GM10248 (cell line): ENCODE measurements at regions of chr17 and their contacts with region 1.

Region 1: DNA sequence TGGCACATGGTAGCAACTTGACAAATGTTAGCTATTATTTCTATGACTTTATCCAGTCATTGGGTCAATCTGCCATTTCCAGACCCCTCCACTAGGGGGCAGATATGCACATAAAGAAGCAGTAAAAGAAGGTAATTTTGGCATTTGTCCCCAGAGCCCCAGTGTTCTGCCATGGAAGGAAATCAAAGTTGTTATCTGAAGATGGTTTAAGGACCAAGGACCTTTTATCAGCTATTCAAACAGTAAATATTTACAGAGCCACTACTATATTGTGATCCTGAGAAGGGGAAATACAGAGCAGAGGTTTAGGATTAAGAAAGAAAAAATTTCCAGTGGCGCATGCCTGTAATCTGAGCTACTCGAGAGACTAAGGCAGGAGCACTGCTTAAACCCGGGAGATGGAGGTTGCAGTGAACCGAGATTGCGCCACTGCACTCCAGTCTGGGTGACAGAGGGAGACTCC is 20.0 kb downstream of the TRAF4 start:
- DNase-seq: peak; percentile 71
- CTCF ChIP-seq: peak; percentile 77

Region 2: GRCh38 chr17:28576758-28577465 is 186.9 kb before region 1 on chr17 and contains the start of gene ALDOC:
- CTCF ChIA-PET with region 1: no interaction called
- POLR2A ChIA-PET with region 1: no interaction called
- DNase-seq: peak; percentile 99
- CTCF ChIP-seq: no peak

Region 3: DNA sequence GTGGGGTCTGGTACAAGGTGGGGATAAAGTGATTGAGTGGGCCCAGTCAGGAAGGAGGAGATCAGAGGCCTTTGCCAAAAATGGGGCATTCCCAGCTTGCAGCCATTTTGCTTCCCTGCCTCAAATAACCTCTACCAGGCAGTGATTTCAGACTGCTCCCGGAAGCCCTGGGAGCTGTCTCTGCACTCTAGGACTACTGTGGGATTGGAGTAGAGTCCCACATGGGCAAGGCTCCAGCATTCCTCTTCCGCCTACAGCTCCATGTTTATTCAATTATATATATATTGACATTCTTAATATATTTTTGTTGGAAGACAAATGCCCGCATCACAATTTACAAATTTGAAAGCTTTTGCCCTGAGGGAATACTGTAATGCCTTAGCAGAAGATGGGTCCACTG is 88.3 kb before region 1 on chr17:
- CTCF ChIA-PET with region 1: no interaction called
- POLR2A ChIA-PET with region 1: no interaction called
- DNase-seq: no peak
- CTCF ChIP-seq: no peak

Region 4: DNA sequence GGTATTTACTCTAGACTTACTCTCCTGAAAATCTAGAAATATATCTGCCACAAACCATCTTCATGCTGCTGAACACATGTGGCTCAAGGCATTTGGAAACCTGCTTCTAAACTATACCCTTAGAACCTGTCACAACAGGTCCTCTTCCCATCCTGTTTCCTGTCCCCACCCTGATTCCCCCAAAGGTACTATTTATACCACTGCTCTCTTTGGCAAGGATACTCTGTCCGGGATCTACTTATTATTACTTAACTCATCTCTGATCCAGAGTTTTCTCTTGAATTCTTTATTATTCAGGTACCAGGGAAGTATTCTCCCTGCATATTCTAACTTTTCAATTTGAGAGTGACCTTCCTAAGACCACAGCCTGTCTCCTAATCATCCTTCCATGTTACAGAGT is 13.3 kb after region 1 on chr17:
- CTCF ChIA-PET with region 1: interaction called, 94 read pairs
- POLR2A ChIA-PET with region 1: no interaction called
- DNase-seq: no peak
- CTCF ChIP-seq: no peak

Region 5: DNA sequence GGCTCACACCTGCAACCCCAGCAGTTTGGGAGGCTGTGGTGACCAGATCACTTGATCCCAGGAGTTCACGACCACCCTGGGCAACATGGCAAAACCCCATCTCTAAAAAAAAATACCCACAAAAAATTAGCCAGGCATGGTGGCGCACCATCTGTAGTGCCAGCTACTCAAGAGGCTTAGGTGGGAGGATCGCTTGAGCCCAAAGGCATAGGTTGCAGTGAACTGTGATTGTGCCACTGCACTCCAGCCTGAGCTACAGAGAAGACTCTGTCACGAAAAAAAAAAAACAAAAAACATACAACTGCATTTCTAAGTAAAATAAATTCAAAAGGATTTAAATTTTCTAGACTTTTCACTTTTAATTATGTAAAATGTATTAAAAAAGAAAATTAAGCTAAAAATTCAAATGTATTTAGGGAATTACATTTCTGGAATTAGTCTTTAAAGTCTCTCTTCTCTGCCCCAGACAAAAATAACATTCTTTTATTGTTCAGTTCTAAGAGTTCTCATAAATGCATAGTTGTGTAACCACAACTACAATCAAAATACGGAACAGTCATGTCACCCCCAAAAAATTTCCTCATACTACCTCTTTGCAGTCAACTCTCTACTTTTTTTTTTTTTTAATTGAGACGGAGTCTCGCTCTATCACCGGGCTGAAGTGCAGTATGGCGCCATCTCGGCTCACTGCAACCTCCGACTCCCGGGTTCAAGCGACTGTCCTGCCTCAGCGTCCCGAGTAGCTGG is 64.6 kb after region 1 on chr17:
- CTCF ChIA-PET with region 1: interaction called, 12 read pairs
- POLR2A ChIA-PET with region 1: no interaction called
- DNase-seq: no peak
- CTCF ChIP-seq: no peak

Region 6: DNA sequence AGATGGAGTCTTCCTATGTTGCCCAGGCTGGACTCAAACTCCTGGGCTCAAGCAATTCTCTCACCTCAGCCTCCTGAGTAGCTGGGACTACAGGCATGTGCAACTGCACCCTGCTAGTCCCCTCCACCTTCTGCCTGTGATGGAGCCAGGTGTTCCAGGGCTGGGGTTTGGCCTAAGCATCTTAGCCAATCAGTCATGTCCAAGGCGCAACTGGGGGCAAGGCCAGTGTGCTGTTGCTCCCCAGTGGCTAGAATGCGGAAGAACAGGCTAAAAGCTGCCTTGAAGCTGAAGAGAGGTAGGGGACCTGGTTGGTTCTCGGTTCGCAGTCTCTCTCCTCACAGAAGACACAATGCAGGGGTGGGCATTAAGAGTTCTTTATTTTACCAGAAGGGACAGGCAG is 115.1 kb after region 1 on chr17:
- CTCF ChIA-PET with region 1: interaction called, 13 read pairs
- POLR2A ChIA-PET with region 1: interaction called, 10 read pairs
- DNase-seq: peak; percentile 70
- CTCF ChIP-seq: peak; percentile 56

Region 7: DNA sequence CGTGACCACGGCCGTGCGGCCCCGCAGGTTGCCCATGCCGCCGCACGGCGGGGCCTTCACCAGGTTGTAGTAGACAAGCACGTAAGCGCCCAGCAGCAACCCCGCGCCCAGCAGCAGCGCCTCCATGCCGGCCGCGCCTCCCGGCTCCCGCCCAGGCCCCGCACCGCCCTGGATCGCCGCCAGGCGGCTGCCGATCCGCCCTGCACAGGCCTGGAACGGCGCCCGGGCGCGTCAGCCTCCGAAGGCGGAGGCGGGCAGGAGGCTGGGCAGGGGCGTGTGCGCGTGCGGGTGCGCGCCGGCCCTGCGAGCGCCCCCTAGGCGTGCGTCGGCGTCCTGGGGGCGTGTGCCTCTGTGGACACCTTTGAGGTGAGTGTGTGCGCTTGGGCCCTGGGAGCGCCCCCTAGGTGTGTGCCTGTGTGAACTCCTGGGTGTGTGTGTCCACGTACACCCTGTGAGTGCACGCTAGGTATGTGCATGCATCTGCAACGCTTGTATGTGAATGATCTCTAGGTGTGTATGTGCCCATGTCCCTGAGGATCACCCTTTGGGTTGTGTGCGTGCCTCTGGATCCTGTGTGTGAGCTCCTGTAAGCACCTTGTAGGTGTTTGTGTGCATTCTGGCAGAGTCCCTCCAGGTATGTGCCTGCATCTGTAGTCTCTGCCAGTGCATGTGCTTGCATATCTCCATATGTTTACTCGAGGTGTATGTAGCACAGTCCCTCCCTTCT is 139.1 kb after region 1 on chr17 and contains the start of gene DHRS13:
- CTCF ChIA-PET with region 1: interaction called, 89 read pairs
- POLR2A ChIA-PET with region 1: no interaction called
- DNase-seq: peak; percentile 93
- CTCF ChIP-seq: peak; percentile 92

Region 8: DNA sequence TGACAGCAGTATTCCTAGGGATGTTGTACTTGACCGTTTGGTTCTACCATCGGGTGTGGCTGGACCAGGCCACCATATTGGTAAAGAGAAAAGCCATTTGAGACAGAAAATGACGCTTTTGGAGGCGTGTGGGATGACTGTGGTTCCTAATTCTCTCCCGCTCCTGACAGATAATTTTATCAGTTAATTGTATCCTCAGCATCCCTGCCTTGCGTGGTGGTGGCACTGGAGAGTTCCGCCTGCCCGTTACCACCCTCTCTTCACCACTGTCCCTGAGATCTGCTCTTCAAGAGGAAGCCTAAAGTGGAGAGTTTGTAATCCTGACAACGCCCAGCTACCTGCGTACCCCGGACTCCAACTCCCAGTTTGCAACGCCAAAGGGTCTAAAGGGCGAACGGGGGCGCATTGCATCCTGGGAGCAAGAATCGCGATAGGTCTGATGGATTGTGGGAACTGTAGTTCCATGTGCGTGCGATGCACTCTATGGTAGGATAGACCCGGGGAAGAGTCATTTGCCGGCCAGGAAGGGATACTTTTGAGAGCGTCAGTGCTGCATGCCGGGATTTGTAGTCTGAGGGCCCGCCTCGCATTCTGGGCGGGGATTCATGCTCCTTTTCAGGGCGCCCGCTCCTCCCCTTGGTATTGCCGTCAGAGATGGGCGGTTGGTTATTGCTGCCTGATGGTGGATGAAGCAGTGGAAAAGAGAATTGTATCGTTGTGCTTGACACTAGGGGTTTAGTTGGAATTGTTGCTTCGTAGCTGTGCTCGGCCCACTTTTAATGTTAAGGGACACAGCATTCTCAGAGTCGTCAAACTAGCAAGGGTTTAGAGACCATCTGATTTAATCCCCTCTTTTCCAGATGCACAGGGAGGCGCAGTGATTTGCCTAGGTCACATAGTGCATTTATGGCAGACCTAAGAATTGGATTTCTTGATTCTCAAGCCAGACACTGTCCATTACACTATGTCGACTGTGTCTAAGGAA is 188.4 kb after region 1 on chr17:
- CTCF ChIA-PET with region 1: interaction called, 30 read pairs
- POLR2A ChIA-PET with region 1: no interaction called
- DNase-seq: peak; percentile 92
- CTCF ChIP-seq: no peak